CD4-positive, alpha-beta memory T cell (primary cell): ENCODE measurements at regions of chr21 and their contacts with region 1.

Region 1: GRCh38 chr21:33608559-33608958 is 20.1 kb upstream of the DONSON start:
- DNase-seq: no peak
- H3K4me3 ChIP-seq: no peak overlapping the region
- H3K4me3 Mint-ChIP-seq: no peak overlapping the region
- H3K27ac ChIP-seq: no peak overlapping the region
- H3K27ac Mint-ChIP-seq: peak overlapping the region in 2 of 7 donors; percentile 21 to 47
- H3K4me1 ChIP-seq: no peaks in the 10 kb centered on the region
- H3K4me1 Mint-ChIP-seq: peaks cover 0 to 5% (median 3%) of the 10 kb centered on the region in 4 donors
- H3K27me3 ChIP-seq: no peaks in the 10 kb centered on the region
- H3K27me3 Mint-ChIP-seq: no peaks in the 10 kb centered on the region

Region 2: DNA sequence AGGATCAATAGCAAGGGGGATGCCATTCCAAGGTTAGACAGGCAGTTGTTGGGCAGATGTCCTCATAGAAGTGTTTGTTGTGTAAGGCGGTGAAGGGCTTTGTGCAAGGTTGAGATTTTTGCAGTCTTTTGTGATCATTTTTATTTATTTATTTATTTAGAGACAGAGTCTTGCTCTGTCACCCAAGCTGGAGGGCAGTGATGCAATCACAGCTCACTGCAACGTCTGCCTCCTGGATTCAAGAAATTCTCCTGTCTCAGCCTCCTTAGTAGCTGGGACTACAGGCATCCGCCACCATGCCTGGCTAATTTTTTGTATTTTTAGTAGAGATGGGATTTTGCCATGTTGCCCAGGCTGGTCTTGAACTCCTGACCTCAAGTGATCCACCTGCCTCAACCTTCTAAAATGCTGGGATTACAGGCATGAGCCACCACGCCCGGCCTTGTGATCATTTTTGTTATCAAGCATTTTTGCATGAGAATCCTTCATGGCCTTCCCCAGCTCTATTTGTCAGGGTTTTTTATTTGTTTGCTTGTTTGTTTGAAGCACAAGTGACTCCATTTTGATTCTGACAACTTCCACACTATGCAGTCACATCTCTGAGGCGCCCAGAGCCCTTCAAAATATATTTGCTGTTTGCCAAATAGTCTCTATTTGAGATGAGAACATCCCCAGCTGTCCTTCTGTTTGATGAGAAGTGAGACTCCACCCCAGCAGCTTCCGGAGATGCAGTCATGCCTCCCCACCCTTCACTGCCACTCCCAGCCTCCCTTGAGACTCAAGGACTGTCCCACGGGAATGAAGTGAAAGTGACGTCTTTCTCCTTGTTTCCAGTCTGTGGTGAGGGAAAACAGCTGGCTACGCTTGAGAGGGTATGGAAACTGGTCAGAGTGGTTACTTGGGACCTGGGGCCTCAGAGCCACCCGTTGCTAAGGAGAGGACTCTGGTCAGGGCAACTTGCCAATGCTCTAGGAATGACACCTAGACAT is 166.8 kb before region 1 on chr21:
- CTCF ChIA-PET with region 1: interaction called, 18 read pairs
- POLR2A ChIA-PET with region 1: no interaction called
- intact Hi-C with region 1: loop called (anchors 5 kb)
- DNase-seq: no peak
- H3K4me3 ChIP-seq: no peak overlapping the region
- H3K4me3 Mint-ChIP-seq: no peak overlapping the region
- H3K27ac ChIP-seq: no peak overlapping the region
- H3K27ac Mint-ChIP-seq: peak overlapping the region in 4 of 7 donors; percentile 14 to 53 (median 30)
- H3K4me1 ChIP-seq: no peaks in the 10 kb centered on the region
- H3K4me1 Mint-ChIP-seq: peaks cover 5 to 9% (median 7%) of the 10 kb centered on the region in 4 donors
- H3K27me3 ChIP-seq: no peaks in the 10 kb centered on the region
- H3K27me3 Mint-ChIP-seq: no peaks in the 10 kb centered on the region

Region 3: GRCh38 chr21:33479679-33480480 is 128.7 kb before region 1 on chr21 and contains the start of gene TMEM50B:
- CTCF ChIA-PET with region 1: interaction called, 18 read pairs
- POLR2A ChIA-PET with region 1: interaction called, 17 read pairs
- intact Hi-C with region 1: loop called (anchors 1 kb)
- DNase-seq: peak; percentile 91 to 95 (median 94)
- H3K4me3 ChIP-seq: peak within 1 kb of the TSS; percentile 71 to 95
- H3K4me3 Mint-ChIP-seq: peak within 1 kb of the TSS; percentile 92 to 96 (median 94)
- H3K27ac ChIP-seq: peak within 1 kb of the TSS; percentile 91
- H3K27ac Mint-ChIP-seq: peak within 1 kb of the TSS; percentile 87 to 97 (median 95)
- H3K4me1 ChIP-seq: peaks cover 14% of the 10 kb centered on the region
- H3K4me1 Mint-ChIP-seq: peaks cover 8 to 29% (median 19%) of the 10 kb centered on the region in 4 donors
- H3K27me3 ChIP-seq: no peaks in the 10 kb centered on the region
- H3K27me3 Mint-ChIP-seq: no peaks in the 10 kb centered on the region
- total RNA-seq, gene TMEM50B: 110 to 112 TPM

Region 4: DNA sequence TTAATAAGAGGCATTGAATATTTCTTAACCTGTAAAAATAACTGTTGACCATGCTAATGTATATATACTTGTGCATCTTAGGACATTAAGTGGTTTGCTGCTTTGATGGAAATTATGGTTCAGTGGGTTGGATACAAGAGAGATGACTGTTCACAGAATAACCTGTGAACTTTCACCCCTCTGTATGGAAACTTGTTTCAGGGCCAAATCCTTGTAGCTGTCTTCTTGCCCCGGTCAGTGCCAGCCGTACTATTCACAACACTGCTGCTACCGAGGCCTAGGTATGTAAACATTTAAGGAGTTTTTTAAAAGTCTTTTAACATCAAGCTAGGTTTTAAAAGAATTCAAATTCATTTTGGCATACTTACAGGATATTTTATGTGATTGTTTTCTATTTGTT is 36.2 kb before region 1 on chr21:
- CTCF ChIA-PET with region 1: interaction called, 19 read pairs
- POLR2A ChIA-PET with region 1: no interaction called
- intact Hi-C with region 1: no loop called
- DNase-seq: no peak
- H3K4me3 ChIP-seq: no peak overlapping the region
- H3K4me3 Mint-ChIP-seq: no peak overlapping the region
- H3K27ac ChIP-seq: no peak overlapping the region
- H3K27ac Mint-ChIP-seq: peak overlapping the region in 6 of 7 donors; percentile 5 to 78 (median 47)
- H3K4me1 ChIP-seq: peaks cover 10% of the 10 kb centered on the region
- H3K4me1 Mint-ChIP-seq: peaks cover 8 to 25% (median 15%) of the 10 kb centered on the region in 4 donors
- H3K27me3 ChIP-seq: no peaks in the 10 kb centered on the region
- H3K27me3 Mint-ChIP-seq: no peaks in the 10 kb centered on the region

Region 5: DNA sequence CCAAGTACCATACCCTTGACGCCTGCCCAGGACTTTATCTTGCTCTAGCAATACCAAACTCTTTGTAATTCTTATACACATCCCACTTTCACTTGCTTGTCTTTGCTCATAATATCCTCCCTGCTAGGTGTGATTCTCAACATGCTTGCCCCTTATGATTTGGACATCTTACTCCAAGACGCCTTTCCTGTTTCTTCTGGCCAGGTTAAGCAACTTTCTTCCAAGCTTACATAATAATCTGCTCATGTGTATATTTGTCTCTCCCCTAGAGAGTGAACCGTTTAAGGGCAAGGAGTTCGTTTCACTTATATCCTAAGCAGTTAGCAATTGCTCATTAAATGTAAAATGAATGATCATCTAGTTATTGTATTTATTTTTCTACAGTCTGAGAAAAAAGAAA is 11.2 kb after region 1 on chr21:
- CTCF ChIA-PET with region 1: interaction called, 19 read pairs
- POLR2A ChIA-PET with region 1: no interaction called
- intact Hi-C with region 1: no loop called
- DNase-seq: no peak
- H3K4me3 ChIP-seq: no peak overlapping the region
- H3K4me3 Mint-ChIP-seq: no peak overlapping the region
- H3K27ac ChIP-seq: no peak overlapping the region
- H3K27ac Mint-ChIP-seq: peak overlapping the region in 1 of 7 donors; percentile 55
- H3K4me1 ChIP-seq: no peaks in the 10 kb centered on the region
- H3K4me1 Mint-ChIP-seq: no peaks in the 10 kb centered on the region
- H3K27me3 ChIP-seq: no peaks in the 10 kb centered on the region
- H3K27me3 Mint-ChIP-seq: no peaks in the 10 kb centered on the region